PC-9 (cell line): ENCODE measurements at regions of chr1 and their contacts with region 1.

Region 1: GRCh38 chr1:6832531-6833188 is 47.4 kb downstream of the CAMTA1 start:
- DNase-seq: no peak
- H3K4me3 ChIP-seq: no peak overlapping the region
- H3K27ac ChIP-seq: no peak overlapping the region
- H3K4me1 ChIP-seq: no peaks in the 10 kb centered on the region
- H3K27me3 ChIP-seq: no peaks in the 10 kb centered on the region
- CTCF ChIP-seq: no peak

Region 2: DNA sequence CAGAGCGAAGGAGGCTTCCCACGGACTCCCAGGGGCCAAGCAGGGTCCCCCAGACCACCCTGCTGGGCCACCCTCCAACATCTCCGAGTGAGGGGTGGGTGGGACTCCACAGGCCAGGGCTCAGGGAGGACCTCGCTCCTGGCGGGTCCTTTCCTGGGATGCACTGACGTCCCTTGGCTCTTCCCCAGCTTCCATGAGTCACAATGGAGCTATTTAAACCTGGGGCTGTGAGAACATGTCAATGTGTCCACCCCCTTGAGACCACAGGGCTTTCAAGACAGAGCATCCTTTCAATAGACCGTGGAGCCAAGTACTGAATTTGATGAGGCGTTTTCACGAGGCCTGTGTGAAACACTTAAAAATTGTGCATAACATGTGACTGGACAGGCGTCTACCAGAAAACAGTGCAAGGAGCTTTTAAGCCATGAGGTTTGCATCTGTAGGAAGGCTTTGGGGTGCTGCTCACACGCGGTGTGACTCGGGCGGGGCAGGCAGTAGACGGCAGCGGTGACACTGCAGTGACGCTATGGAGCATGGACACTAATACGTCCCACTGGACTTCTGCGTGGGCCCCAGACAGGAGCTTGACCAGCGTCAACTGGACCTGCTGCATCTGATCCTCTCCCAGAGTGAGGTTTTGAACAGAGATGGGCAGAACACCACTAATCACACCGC is 816.3 kb before region 1 on chr1:
- CTCF ChIA-PET with region 1: no interaction called
- POLR2A ChIA-PET with region 1: no interaction called
- intact Hi-C with region 1: no loop called
- DNase-seq: no peak
- H3K4me3 ChIP-seq: no peak overlapping the region
- H3K27ac ChIP-seq: no peak overlapping the region
- H3K4me1 ChIP-seq: no peaks in the 10 kb centered on the region
- H3K27me3 ChIP-seq: no peaks in the 10 kb centered on the region
- CTCF ChIP-seq: no peak

Region 3: GRCh38 chr1:6889875-6890480 is 57.3 kb after region 1 on chr1:
- CTCF ChIA-PET with region 1: no interaction called
- POLR2A ChIA-PET with region 1: no interaction called
- intact Hi-C with region 1: no loop called
- DNase-seq: peak in 1 of 2 experiments; percentile 31
- H3K4me3 ChIP-seq: no peak overlapping the region
- H3K27ac ChIP-seq: no peak overlapping the region
- H3K4me1 ChIP-seq: no peaks in the 10 kb centered on the region
- H3K27me3 ChIP-seq: no peaks in the 10 kb centered on the region
- CTCF ChIP-seq: peak; percentile 69

Region 4: DNA sequence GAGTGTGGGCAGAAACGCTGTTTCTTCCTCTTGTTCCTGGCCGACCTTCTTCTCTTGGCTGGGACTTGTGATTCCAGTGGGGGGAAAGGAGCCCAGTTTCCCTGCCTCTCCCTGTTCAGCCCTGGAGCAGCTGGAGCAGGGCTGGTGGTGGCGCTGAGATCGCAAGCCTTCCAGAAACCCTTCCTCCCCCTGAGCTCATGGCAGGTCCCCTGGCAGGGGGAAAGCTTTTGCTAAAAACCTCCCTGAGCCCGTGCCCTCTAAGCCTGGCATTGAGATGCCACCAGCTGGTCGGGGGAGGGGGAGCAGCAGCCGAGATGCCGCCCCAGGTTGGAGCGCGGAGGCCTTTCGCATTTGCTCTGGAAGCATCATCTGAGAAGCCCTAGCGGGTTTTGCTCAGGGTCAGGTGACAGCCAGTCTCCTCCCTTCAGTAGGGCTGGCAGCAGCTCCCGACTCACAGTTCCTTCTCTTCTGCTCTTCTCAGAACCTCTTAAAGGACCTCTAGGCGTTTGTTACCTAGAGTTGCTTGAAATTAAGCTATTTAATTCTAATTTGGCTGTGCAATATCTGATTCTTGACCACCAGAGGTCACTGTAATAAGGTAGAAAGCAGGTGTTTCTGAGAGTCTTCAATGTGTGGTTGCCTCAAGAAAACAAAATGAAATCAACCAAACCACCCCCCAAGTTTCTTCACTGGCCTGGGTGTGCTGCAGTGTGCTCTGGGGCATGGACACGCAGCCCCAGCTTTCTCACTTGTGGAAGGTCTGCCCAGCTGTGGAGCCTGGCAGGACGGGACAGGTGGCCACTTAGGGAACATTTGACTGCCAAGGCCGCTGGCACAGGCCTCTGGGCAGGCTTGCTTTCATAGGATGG is 209.9 kb after region 1 on chr1:
- CTCF ChIA-PET with region 1: interaction called, 19 read pairs
- POLR2A ChIA-PET with region 1: no interaction called
- intact Hi-C with region 1: no loop called
- DNase-seq: no peak
- H3K4me3 ChIP-seq: no peak overlapping the region
- H3K27ac ChIP-seq: no peak overlapping the region
- H3K4me1 ChIP-seq: no peaks in the 10 kb centered on the region
- H3K27me3 ChIP-seq: peaks cover 32% of the 10 kb centered on the region
- CTCF ChIP-seq: peak; percentile 65